Naive thymus-derived CD4-positive, alpha-beta T cell (primary cell): ENCODE measurements at regions of chr2 and their contacts with region 1.

Region 1: GRCh38 chr2:55232084-55232862 is at the starts of genes CLHC1 and RPS27A:
- DNase-seq: peak; percentile 90 to 97 (median 93)
- ATAC-seq: peak; percentile 95
- H3K4me3 ChIP-seq: peak within 1 kb of the TSS; percentile 75
- H3K4me3 Mint-ChIP-seq: peak within 1 kb of the TSS; percentile 96 to 100 (median 100)
- H3K27ac ChIP-seq: peak within 1 kb of the TSS; percentile 99
- H3K27ac Mint-ChIP-seq: peak within 1 kb of the TSS; percentile 96 to 99 (median 99)
- H3K4me1 ChIP-seq: peaks cover 26 to 30% of the 10 kb centered on the region in 2 donors
- H3K4me1 Mint-ChIP-seq: peaks cover 41 to 84% (median 63%) of the 10 kb centered on the region in 7 donors
- H3K27me3 ChIP-seq: no peaks in the 10 kb centered on the region
- H3K27me3 Mint-ChIP-seq: no peaks in the 10 kb centered on the region
- total RNA-seq, gene CLHC1: 5.3 to 19.5 (median 15.1) TPM
- total RNA-seq, gene RPS27A: 948 to 2,409 (median 2,155) TPM

Region 2: GRCh38 chr2:53767405-53768241 is 1464.7 kb before region 1 on chr2 and contains the start of gene CHAC2:
- CTCF ChIA-PET with region 1: no interaction called
- POLR2A ChIA-PET with region 1: no interaction called
- intact Hi-C with region 1: loop called (anchors 1 to 5 kb)
- DNase-seq: peak; percentile 74 to 86 (median 84)
- ATAC-seq: peak; percentile 93
- H3K4me3 ChIP-seq: peak within 1 kb of the TSS; percentile 80
- H3K4me3 Mint-ChIP-seq: peak within 1 kb of the TSS; percentile 88 to 98 (median 92)
- H3K27ac ChIP-seq: peak within 1 kb of the TSS; percentile 86
- H3K27ac Mint-ChIP-seq: peak within 1 kb of the TSS; percentile 60 to 99 (median 90)
- H3K4me1 ChIP-seq: peaks cover 0 to 8% of the 10 kb centered on the region in 2 donors
- H3K4me1 Mint-ChIP-seq: peaks cover 7 to 41% (median 33%) of the 10 kb centered on the region in 7 donors
- H3K27me3 ChIP-seq: no peaks in the 10 kb centered on the region
- H3K27me3 Mint-ChIP-seq: no peaks in the 10 kb centered on the region
- total RNA-seq, gene CHAC2: 0.29 to 12.1 (median 1.2) TPM

Region 3: DNA sequence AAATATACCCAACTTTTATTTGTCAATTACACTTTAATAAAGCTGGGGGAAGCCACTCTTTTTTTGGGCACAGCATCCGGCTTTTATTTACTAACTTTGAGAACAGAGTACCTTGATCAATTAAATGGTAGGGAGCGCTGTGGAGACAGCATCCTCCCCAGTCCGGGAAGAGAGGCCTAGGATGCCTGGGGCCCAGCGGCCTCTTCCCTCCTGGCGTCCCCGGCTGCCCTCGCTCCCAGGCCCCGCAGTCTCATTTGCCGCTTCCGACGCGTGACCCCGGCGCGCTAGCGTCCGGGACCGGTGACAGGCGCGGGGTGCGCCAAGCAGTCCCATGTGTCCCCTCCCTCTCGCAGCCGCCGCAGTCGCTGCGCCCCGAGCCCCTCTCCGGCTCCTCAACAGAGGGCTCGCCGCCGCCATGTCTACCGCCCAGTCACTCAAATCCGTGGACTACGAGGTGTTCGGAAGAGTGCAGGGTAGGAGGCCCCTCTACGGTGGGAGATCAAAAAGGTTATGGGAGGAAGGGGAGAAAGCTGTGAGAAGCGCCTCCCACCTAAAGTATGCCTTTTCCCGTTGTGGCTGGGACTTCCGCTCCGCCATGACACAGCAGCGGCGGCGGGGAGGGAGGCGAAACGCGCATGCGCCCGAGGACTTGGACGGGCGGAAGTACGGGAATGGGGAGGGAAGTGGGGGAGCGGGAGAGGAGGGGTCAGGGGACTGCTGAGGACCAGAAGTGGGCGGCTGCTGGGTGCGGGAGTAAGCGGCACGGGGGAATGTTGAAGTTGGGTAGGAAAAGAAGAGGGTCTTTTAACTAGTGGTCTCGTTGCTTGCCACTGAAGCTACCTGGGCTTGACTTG is 1116.8 kb before region 1 on chr2 and contains the start of gene ACYP2:
- CTCF ChIA-PET with region 1: no interaction called
- POLR2A ChIA-PET with region 1: no interaction called
- intact Hi-C with region 1: loop called in 1 of 2 experiments (anchors 1 kb)
- DNase-seq: peak; percentile 76 to 93 (median 89)
- ATAC-seq: peak; percentile 88
- H3K4me3 ChIP-seq: peak within 1 kb of the TSS; percentile 89
- H3K4me3 Mint-ChIP-seq: peak within 1 kb of the TSS; percentile 92 to 98 (median 97)
- H3K27ac ChIP-seq: peak within 1 kb of the TSS; percentile 93
- H3K27ac Mint-ChIP-seq: peak within 1 kb of the TSS; percentile 98 to 100 (median 99)
- H3K4me1 ChIP-seq: peaks cover 0 to 6% of the 10 kb centered on the region in 2 donors
- H3K4me1 Mint-ChIP-seq: peaks cover 10 to 31% (median 24%) of the 10 kb centered on the region in 7 donors
- H3K27me3 ChIP-seq: no peaks in the 10 kb centered on the region
- H3K27me3 Mint-ChIP-seq: peaks cover 0 to 5% (median 0%) of the 10 kb centered on the region in 5 donors
- total RNA-seq, gene ACYP2: 12.3 to 19.6 (median 15.6) TPM

Region 4: GRCh38 chr2:54589340-54590215 is 642.7 kb before region 1 on chr2:
- CTCF ChIA-PET with region 1: no interaction called
- POLR2A ChIA-PET with region 1: no interaction called
- intact Hi-C with region 1: loop called in 1 of 2 experiments (anchors 5 kb)
- DNase-seq: peak in 6 of 9 donors; percentile 50 to 75 (median 58)
- ATAC-seq: peak; percentile 69
- H3K4me3 ChIP-seq: peak overlapping the region; percentile 34
- H3K4me3 Mint-ChIP-seq: peak overlapping the region; percentile 56 to 93 (median 82)
- H3K27ac ChIP-seq: peak overlapping the region; percentile 70
- H3K27ac Mint-ChIP-seq: peak overlapping the region; percentile 82 to 98 (median 96)
- H3K4me1 ChIP-seq: peaks cover 63 to 89% of the 10 kb centered on the region in 2 donors
- H3K4me1 Mint-ChIP-seq: peaks cover 60 to 100% (median 95%) of the 10 kb centered on the region in 7 donors
- H3K27me3 ChIP-seq: no peaks in the 10 kb centered on the region
- H3K27me3 Mint-ChIP-seq: no peaks in the 10 kb centered on the region

Region 5: DNA sequence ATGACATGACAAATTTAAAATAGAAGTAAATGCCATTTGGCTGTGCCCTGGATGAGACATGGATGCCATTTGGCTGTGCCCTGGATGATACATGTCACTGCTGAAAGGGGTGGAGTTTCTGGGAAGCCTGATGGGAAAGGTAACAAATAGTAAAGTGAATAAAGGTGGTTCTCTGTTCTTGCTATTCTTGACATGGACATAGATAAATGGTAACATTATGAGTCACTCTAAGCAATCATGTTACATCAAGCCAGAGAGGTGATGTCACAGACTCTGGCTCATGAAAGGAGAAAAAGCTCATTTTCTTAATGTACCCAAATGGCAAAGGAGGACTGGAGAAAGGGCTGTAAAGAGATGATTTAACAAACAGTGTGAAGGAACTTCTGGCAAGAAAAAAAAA is 422.5 kb before region 1 on chr2:
- CTCF ChIA-PET with region 1: no interaction called
- POLR2A ChIA-PET with region 1: no interaction called
- intact Hi-C with region 1: no loop called
- DNase-seq: no peak
- ATAC-seq: no peak
- H3K4me3 ChIP-seq: no peak overlapping the region
- H3K4me3 Mint-ChIP-seq: no peak overlapping the region
- H3K27ac ChIP-seq: no peak overlapping the region
- H3K27ac Mint-ChIP-seq: no peak overlapping the region
- H3K4me1 ChIP-seq: no peaks in the 10 kb centered on the region
- H3K4me1 Mint-ChIP-seq: peaks cover 0 to 3% (median 0%) of the 10 kb centered on the region in 7 donors
- H3K27me3 ChIP-seq: no peaks in the 10 kb centered on the region
- H3K27me3 Mint-ChIP-seq: peaks cover 10 to 27% (median 14%) of the 10 kb centered on the region in 5 donors

Region 6: GRCh38 chr2:55120634-55121359 is 111.5 kb before region 1 on chr2:
- CTCF ChIA-PET with region 1: no interaction called
- POLR2A ChIA-PET with region 1: no interaction called
- intact Hi-C with region 1: no loop called
- DNase-seq: no peak
- ATAC-seq: no peak
- H3K4me3 ChIP-seq: no peak overlapping the region
- H3K4me3 Mint-ChIP-seq: no peak overlapping the region
- H3K27ac ChIP-seq: no peak overlapping the region
- H3K27ac Mint-ChIP-seq: no peak overlapping the region
- H3K4me1 ChIP-seq: no peaks in the 10 kb centered on the region
- H3K4me1 Mint-ChIP-seq: peaks cover 0 to 10% (median under 1%) of the 10 kb centered on the region in 7 donors
- H3K27me3 ChIP-seq: no peaks in the 10 kb centered on the region
- H3K27me3 Mint-ChIP-seq: peaks cover 0 to 9% (median 0%) of the 10 kb centered on the region in 5 donors

Region 7: DNA sequence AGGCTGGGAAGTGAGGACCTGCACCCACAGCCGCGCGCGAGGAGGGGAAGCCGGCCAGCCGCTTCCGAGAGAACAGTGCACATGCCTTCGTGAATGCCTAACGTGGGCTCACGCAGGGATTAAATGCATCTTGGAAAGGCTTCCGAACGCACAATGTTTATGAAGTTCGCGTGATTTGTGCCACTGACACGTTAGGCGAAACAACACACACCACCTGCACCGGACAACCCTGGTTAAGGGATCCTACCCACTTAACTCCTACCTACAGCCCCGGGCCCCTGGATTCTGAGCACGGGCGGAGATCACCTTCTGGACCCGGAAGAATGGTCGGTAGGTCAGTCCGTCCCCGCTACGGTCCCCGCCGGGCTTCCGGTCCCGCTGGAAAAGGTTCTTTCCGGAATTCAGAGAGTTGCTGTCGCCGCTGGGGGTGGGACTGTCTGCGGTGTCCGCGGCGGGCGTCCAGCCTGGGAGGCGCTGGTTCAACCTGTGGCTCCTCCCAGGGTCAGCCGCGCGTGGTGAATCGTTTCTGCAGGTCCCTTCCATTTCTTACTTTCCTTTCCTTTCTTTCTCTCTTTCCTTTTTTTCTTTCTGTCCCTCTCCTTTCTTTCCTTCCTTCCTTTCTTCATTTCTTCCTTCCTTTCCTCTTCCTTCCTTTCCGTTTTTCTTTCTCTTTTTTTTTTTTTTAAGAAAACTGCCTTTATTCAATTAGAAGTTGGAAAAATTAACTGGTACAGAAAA is 36.8 kb after region 1 on chr2 and contains the start of gene MTIF2:
- CTCF ChIA-PET with region 1: no interaction called
- POLR2A ChIA-PET with region 1: interaction called, 14 read pairs
- intact Hi-C with region 1: loop called (anchors 1 kb)
- DNase-seq: peak; percentile 64 to 90 (median 75)
- ATAC-seq: peak; percentile 97
- H3K4me3 ChIP-seq: peak within 1 kb of the TSS; percentile 84
- H3K4me3 Mint-ChIP-seq: peak within 1 kb of the TSS; percentile 78 to 97 (median 94)
- H3K27ac ChIP-seq: peak within 1 kb of the TSS; percentile 79
- H3K27ac Mint-ChIP-seq: peak within 1 kb of the TSS; percentile 94 to 97 (median 96)
- H3K4me1 ChIP-seq: peaks cover 13 to 16% of the 10 kb centered on the region in 2 donors
- H3K4me1 Mint-ChIP-seq: peaks cover 15 to 35% (median 27%) of the 10 kb centered on the region in 7 donors
- H3K27me3 ChIP-seq: no peaks in the 10 kb centered on the region
- H3K27me3 Mint-ChIP-seq: peaks cover 0 to 5% (median 0%) of the 10 kb centered on the region in 5 donors
- total RNA-seq, gene MTIF2: 23.0 to 35.5 (median 28.0) TPM

Region 8: GRCh38 chr2:55519938-55520885 is 287.9 kb after region 1 on chr2:
- CTCF ChIA-PET with region 1: no interaction called
- POLR2A ChIA-PET with region 1: interaction called, 4 read pairs
- intact Hi-C with region 1: loop called (anchors 1 kb)
- DNase-seq: peak in 4 of 9 donors; percentile 23 to 58 (median 26)
- ATAC-seq: peak; percentile 31
- H3K4me3 ChIP-seq: peak overlapping the region; percentile 80
- H3K4me3 Mint-ChIP-seq: peak overlapping the region; percentile 89 to 99 (median 98)
- H3K27ac ChIP-seq: peak overlapping the region; percentile 90
- H3K27ac Mint-ChIP-seq: peak overlapping the region; percentile 96 to 100 (median 100)
- H3K4me1 ChIP-seq: peaks cover 0 to 5% of the 10 kb centered on the region in 2 donors
- H3K4me1 Mint-ChIP-seq: peaks cover 5 to 28% (median 16%) of the 10 kb centered on the region in 7 donors
- H3K27me3 ChIP-seq: no peaks in the 10 kb centered on the region
- H3K27me3 Mint-ChIP-seq: no peaks in the 10 kb centered on the region